SK-N-SH (cell line): ENCODE measurements at regions of chr7 and their contacts with region 1.

Region 1: GRCh38 chr7:123635551-123636359 is 19.9 kb upstream of the LMOD2 start:
- DNase-seq: peak; percentile 72
- H3K4me3 ChIP-seq: no peak overlapping the region; a peak in 1 of 4 replicates
- H3K27ac ChIP-seq: no peak overlapping the region
- H3K4me1 ChIP-seq: peaks cover 3 to 4% of the 10 kb centered on the region in 2 experiments; a peak in 2 of 4 replicates
- H3K27me3 ChIP-seq: no peaks in the 10 kb centered on the region
- CTCF ChIP-seq: peak; percentile 92
- EP300 ChIP-seq: no peak
- RAD21 ChIP-seq: peak; percentile 98

Region 2: GRCh38 chr7:122995600-122995999 is 640.2 kb before region 1 on chr7 and contains the start of gene TAS2R16:
- CTCF ChIA-PET with region 1: no interaction called
- POLR2A ChIA-PET with region 1: no interaction called
- DNase-seq: no peak
- H3K4me3 ChIP-seq: no peak within 1 kb of the TSS
- H3K27ac ChIP-seq: no peak within 1 kb of the TSS
- H3K4me1 ChIP-seq: no peaks in the 10 kb centered on the region
- H3K27me3 ChIP-seq: peaks cover 12% of the 10 kb centered on the region
- CTCF ChIP-seq: no peak
- EP300 ChIP-seq: no peak
- RAD21 ChIP-seq: no peak
- polyA plus RNA-seq, gene TAS2R16: not detected in 2 replicates

Region 3: GRCh38 chr7:123615344-123615743 is 20.4 kb before region 1 on chr7:
- CTCF ChIA-PET with region 1: interaction called, 30 read pairs
- POLR2A ChIA-PET with region 1: no interaction called
- DNase-seq: peak; percentile 60
- H3K4me3 ChIP-seq: no peak overlapping the region
- H3K27ac ChIP-seq: peak overlapping the region in 1 of 2 experiments; percentile 67; a peak in 1 of 4 replicates
- H3K4me1 ChIP-seq: peaks cover 0 to 13% of the 10 kb centered on the region in 2 experiments; a peak in 2 of 4 replicates
- H3K27me3 ChIP-seq: no peaks in the 10 kb centered on the region
- CTCF ChIP-seq: no peak
- EP300 ChIP-seq: peak in 1 of 2 experiments; percentile 63; a peak in 2 of 4 replicates
- RAD21 ChIP-seq: no peak

Region 4: DNA sequence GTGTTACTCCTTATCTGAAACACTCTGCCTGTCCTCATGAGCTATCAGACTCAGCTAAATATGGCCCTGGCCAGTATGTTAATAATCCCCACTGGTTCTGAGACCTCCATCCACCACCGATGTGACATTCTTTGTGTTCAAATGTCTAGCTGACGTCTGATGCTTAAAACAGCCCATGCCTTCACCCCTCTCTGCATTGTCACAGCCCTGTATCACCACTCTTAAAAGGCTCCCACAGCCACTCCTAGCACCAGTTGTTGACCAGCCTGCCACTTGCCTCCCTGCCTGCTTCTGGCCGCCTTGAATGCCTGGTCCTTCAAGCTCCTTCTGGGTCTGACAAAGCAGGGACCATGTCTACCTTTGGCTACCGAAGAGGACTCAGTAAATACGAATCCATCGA is 19.9 kb after region 1 on chr7 and contains the start of gene LMOD2:
- CTCF ChIA-PET with region 1: interaction called, 14 read pairs
- POLR2A ChIA-PET with region 1: no interaction called
- DNase-seq: no peak
- H3K4me3 ChIP-seq: no peak within 1 kb of the TSS
- H3K27ac ChIP-seq: no peak within 1 kb of the TSS
- H3K4me1 ChIP-seq: peaks cover 0 to 4% of the 10 kb centered on the region in 2 experiments; a peak in 1 of 4 replicates
- H3K27me3 ChIP-seq: no peaks in the 10 kb centered on the region
- CTCF ChIP-seq: no peak
- EP300 ChIP-seq: no peak
- RAD21 ChIP-seq: no peak
- polyA plus RNA-seq, gene LMOD2: 0.05 TPM in 1 of 2 replicates, not detected in the other

Region 5: DNA sequence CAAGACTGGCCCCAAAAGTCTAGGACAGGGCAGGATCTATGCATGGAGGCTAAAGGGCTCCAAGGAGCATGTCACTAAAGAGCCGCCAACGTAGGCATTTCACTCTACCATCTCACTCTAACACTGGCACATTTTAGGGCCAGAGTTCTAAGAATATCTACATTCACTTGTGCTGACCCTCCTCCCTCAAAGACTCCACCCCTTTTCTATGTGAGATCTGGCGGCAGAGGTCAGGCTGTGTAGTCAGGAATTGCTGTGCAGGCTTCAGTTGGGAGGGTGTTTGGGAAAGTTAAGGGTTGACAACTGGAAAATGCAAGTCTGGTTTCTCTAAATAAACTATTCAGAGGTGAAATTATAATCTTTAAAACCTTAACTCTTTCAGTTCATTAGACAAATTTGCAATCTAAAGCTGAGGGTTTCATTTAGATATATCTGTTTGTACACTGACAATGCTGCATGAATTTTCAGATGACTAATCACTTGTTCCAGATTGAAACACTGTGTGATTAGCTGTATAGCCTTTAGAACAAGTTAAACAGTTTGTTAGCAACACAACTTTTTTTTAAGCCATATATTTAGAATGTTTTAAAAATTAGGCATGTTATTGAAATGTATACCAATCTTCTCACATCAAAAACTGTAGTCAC is 38.1 kb after region 1 on chr7:
- CTCF ChIA-PET with region 1: interaction called, 11 read pairs
- POLR2A ChIA-PET with region 1: no interaction called
- DNase-seq: no peak
- H3K4me3 ChIP-seq: no peak overlapping the region
- H3K27ac ChIP-seq: peak overlapping the region in 1 of 2 experiments; percentile 14; a peak in 1 of 4 replicates
- H3K4me1 ChIP-seq: peaks cover 0 to 17% of the 10 kb centered on the region in 2 experiments; a peak in 3 of 4 replicates
- H3K27me3 ChIP-seq: no peaks in the 10 kb centered on the region
- CTCF ChIP-seq: no peak
- EP300 ChIP-seq: no peak
- RAD21 ChIP-seq: no peak

Region 6: GRCh38 chr7:123748734-123749536 is 113.2 kb after region 1 on chr7 and contains the start of gene WASL:
- CTCF ChIA-PET with region 1: interaction called, 12 read pairs
- POLR2A ChIA-PET with region 1: no interaction called
- DNase-seq: peak; percentile 99
- H3K4me3 ChIP-seq: peak within 1 kb of the TSS; percentile 94 to 100
- H3K27ac ChIP-seq: peak within 1 kb of the TSS; percentile 96 to 100
- H3K4me1 ChIP-seq: peaks cover 27 to 57% of the 10 kb centered on the region in 2 experiments; a peak in 3 of 4 replicates
- H3K27me3 ChIP-seq: no peaks in the 10 kb centered on the region
- CTCF ChIP-seq: no peak
- EP300 ChIP-seq: peak; percentile 26 to 72; a peak in 2 of 4 replicates
- RAD21 ChIP-seq: peak; percentile 19; the same call in 1 of the 2 replicates
- polyA plus RNA-seq, gene WASL: 8.5 and 9.9 TPM in 2 replicates

Region 7: GRCh38 chr7:123871998-123872867 is 236.5 kb after region 1 on chr7:
- CTCF ChIA-PET with region 1: interaction called, 34 read pairs
- POLR2A ChIA-PET with region 1: no interaction called
- DNase-seq: peak; percentile 61
- H3K4me3 ChIP-seq: no peak overlapping the region
- H3K27ac ChIP-seq: no peak overlapping the region
- H3K4me1 ChIP-seq: peaks cover 0 to 14% of the 10 kb centered on the region in 2 experiments; a peak in 2 of 4 replicates
- H3K27me3 ChIP-seq: no peaks in the 10 kb centered on the region; the same call in 1 of the 2 replicates
- CTCF ChIP-seq: peak; percentile 58
- EP300 ChIP-seq: no peak; a peak in 1 of 4 replicates
- RAD21 ChIP-seq: peak; percentile 93

Region 8: GRCh38 chr7:124219681-124220080 is 583.9 kb after region 1 on chr7:
- CTCF ChIA-PET with region 1: no interaction called
- POLR2A ChIA-PET with region 1: no interaction called
- DNase-seq: no peak
- H3K4me3 ChIP-seq: no peak overlapping the region
- H3K27ac ChIP-seq: no peak overlapping the region
- H3K4me1 ChIP-seq: no peaks in the 10 kb centered on the region; a peak in 1 of 4 replicates
- H3K27me3 ChIP-seq: no peaks in the 10 kb centered on the region
- CTCF ChIP-seq: no peak
- EP300 ChIP-seq: no peak
- RAD21 ChIP-seq: no peak